ENCODE measurements at regions of chr4 and their contacts with region 1.

Region 1: DNA sequence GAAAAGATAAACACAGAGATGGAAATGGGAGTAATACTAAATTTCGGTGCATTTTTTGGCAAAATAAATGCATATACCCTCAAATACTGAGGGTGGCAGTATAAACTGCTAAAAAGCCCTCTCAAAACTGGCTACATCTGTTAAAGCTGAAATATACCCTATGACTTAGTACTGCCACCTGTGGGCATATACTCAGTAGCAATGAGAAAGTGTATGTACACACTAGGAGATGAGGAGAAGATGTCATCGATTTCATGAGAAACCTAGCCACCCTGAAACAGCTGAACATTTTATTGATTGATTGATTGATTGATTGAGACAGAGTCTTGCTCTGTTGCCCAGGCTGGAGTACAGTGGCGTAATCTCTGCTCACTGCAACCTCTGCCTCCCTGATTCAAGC is 12.2 kb upstream of the TMEM128 start:
- DNase-seq: peak; percentile 49 to 72 (median 64)
- H3K4me3 ChIP-seq: no peak overlapping the region
- H3K4me3 Mint-ChIP-seq: no peak overlapping the region
- H3K27ac ChIP-seq: no peak overlapping the region
- H3K27ac Mint-ChIP-seq: peak overlapping the region in 5 of 7 donors; percentile 21 to 83 (median 68)
- H3K4me1 ChIP-seq: no peaks in the 10 kb centered on the region
- H3K4me1 Mint-ChIP-seq: peaks cover 4 to 11% (median 8%) of the 10 kb centered on the region in 4 donors
- H3K27me3 ChIP-seq: no peaks in the 10 kb centered on the region
- H3K27me3 Mint-ChIP-seq: no peaks in the 10 kb centered on the region

Region 2: GRCh38 chr4:4289941-4290850 is 29.9 kb after region 1 on chr4 and contains the starts of genes LYAR and ZBTB49:
- CTCF ChIA-PET with region 1: interaction called, 11 read pairs
- POLR2A ChIA-PET with region 1: interaction called, 6 read pairs
- intact Hi-C with region 1: no loop called
- DNase-seq: peak; percentile 96 to 98 (median 97)
- H3K4me3 ChIP-seq: peak within 1 kb of the TSS; percentile 86 to 93
- H3K4me3 Mint-ChIP-seq: peak within 1 kb of the TSS; percentile 93 to 98 (median 96)
- H3K27ac ChIP-seq: peak within 1 kb of the TSS; percentile 76
- H3K27ac Mint-ChIP-seq: peak within 1 kb of the TSS; percentile 83 to 96 (median 94)
- H3K4me1 ChIP-seq: peaks cover 30% of the 10 kb centered on the region
- H3K4me1 Mint-ChIP-seq: peaks cover 48 to 83% (median 64%) of the 10 kb centered on the region in 4 donors
- H3K27me3 ChIP-seq: no peaks in the 10 kb centered on the region
- H3K27me3 Mint-ChIP-seq: no peaks in the 10 kb centered on the region
- total RNA-seq, gene LYAR: 74.5 to 79.8 TPM
- total RNA-seq, gene ZBTB49: 18.5 to 20.0 TPM

Region 3: DNA sequence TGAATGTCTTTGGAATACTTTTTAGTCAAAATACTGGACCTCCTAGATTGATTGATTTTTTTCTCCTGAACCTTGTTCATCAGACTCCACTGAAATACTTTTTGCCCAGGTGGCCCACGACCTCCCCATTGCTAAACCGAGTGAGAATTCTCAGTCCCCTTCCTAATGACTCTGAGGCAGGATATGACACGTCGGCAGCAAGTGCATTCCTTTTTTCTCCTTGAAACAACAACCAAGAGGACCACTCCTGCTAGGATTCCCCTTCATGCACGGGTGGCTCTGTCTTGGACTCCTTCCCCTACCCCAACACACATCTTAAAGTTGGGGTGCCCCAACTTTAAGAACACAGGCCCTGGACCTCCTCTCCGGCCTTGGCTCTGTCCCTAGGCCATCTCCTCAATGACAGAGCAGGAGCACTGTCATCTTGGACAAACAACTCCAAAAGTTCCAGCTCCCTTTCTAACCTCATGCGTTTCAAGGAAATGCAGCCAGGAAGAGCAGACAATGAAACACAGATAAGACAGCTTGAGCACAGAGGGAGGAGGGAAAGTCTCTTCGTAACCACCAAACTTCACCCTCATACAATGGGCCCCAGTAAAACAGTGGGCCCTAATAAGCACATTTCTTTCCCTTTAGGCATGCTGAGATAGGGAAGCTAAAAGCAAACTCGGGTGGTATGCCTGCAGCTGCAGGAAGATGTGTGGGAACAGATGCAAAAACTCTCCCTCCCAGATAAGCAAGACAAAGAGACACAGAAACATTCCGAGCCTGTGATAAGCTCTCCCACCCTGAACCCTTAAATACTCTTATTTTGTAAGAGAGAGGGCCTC is 63.7 kb after region 1 on chr4:
- CTCF ChIA-PET with region 1: interaction called, 10 read pairs
- POLR2A ChIA-PET with region 1: interaction called, 3 read pairs
- intact Hi-C with region 1: no loop called
- DNase-seq: no peak
- H3K4me3 ChIP-seq: no peak overlapping the region
- H3K4me3 Mint-ChIP-seq: no peak overlapping the region
- H3K27ac ChIP-seq: no peak overlapping the region
- H3K27ac Mint-ChIP-seq: peak overlapping the region in 4 of 7 donors; percentile 19 to 47 (median 34)
- H3K4me1 ChIP-seq: no peaks in the 10 kb centered on the region
- H3K4me1 Mint-ChIP-seq: no peaks in the 10 kb centered on the region
- H3K27me3 ChIP-seq: no peaks in the 10 kb centered on the region
- H3K27me3 Mint-ChIP-seq: no peaks in the 10 kb centered on the region

Region 4: GRCh38 chr4:4334798-4335520 is 74.7 kb after region 1 on chr4:
- CTCF ChIA-PET with region 1: interaction called, 161 read pairs
- POLR2A ChIA-PET with region 1: interaction called, 9 read pairs
- intact Hi-C with region 1: loop called (anchors 1 kb)
- DNase-seq: peak; percentile 73 to 77 (median 76)
- H3K4me3 ChIP-seq: no peak overlapping the region
- H3K4me3 Mint-ChIP-seq: peak overlapping the region in 5 of 8 donors; percentile 30 to 58 (median 41)
- H3K27ac ChIP-seq: no peak overlapping the region
- H3K27ac Mint-ChIP-seq: peak overlapping the region in 6 of 7 donors; percentile 3 to 42 (median 37)
- H3K4me1 ChIP-seq: peaks cover 4% of the 10 kb centered on the region
- H3K4me1 Mint-ChIP-seq: peaks cover 4 to 10% (median 7%) of the 10 kb centered on the region in 4 donors
- H3K27me3 ChIP-seq: no peaks in the 10 kb centered on the region
- H3K27me3 Mint-ChIP-seq: no peaks in the 10 kb centered on the region

Region 5: DNA sequence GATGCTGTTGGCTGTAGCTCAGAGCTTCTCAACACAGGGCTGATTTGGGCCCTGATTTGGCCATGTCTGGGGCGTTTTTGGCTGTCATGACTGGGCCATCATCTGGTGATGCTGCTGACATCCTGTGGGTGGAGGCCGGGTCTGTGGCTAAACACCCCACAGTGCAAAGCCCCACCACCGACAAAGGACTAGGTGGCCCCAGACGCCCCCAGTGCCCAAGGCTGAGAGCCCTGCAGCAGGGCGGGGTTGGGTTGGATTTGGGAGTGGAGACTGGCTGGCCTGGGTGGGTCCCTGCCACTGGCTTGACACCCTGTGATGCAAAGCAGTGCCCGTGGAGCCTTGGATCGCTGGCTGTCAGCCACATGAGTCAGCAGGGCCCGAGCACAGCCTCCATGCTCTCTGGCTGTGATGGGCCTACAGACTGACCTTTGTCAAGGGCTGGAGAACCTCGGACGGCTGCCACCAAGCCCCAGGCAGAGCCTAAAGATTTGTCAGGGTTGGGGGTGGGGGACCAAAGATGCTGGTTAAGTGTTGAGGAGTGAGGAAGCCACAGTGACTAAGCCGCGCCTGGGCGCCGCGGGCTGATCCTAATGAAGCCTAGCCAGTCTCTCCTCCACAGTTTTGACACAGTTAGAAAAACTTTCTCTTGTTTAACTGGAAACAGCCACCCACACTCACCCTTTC is 730.7 kb after region 1 on chr4:
- CTCF ChIA-PET with region 1: no interaction called
- POLR2A ChIA-PET with region 1: no interaction called
- intact Hi-C with region 1: no loop called
- DNase-seq: no peak
- H3K4me3 ChIP-seq: no peak overlapping the region
- H3K4me3 Mint-ChIP-seq: no peak overlapping the region
- H3K27ac ChIP-seq: no peak overlapping the region
- H3K27ac Mint-ChIP-seq: no peak overlapping the region
- H3K4me1 ChIP-seq: no peaks in the 10 kb centered on the region
- H3K4me1 Mint-ChIP-seq: peaks cover 0 to 3% (median 0%) of the 10 kb centered on the region in 4 donors
- H3K27me3 ChIP-seq: no peaks in the 10 kb centered on the region
- H3K27me3 Mint-ChIP-seq: peaks cover 5 to 7% of the 10 kb centered on the region in 2 donors